Mammary epithelial cell (primary cell): ENCODE measurements at regions of chr5 and their contacts with region 1.

Region 1: DNA sequence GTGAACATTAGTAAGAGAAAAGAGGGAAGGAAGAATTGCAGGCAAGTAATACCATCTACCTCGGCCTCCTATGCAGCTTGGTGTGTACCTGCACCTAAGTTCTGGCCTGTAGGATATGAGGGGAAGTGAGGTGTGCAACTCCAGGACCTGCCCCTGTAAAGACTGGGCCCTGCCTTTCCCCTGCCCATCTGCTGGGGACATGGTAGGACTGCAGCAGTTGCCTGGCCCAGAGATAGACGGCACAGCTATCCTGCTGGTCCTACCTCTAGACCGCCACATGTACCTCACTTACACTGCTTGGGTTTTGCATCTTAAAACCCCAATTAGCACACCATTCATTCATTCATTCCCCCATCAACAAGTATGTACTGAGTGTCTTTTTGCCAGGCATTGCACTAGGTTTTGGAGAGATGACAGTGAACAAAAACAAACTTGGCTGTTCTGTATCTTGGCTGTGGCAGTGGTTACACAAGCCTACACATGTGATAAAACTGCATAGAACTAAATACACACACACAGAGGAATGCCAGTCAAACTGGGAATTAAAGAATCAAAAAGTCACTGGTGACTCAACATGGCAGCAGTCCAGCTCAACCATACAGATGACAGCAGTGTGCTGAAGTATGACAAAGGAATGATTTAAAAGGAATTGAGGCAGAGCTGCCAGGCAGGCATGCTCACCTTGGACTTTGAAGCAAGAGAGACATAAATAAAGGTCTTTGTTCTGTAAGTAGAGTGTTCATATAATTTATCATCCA is 23.3 kb upstream of the MGAT1 start:
- DNase-seq: peak; percentile 96
- H3K4me3 ChIP-seq: no peak overlapping the region
- H3K27ac ChIP-seq: peak overlapping the region; percentile 4
- H3K4me1 ChIP-seq: peaks cover 28% of the 10 kb centered on the region
- H3K27me3 ChIP-seq: no peaks in the 10 kb centered on the region
- CTCF ChIP-seq: no peak

Region 2: DNA sequence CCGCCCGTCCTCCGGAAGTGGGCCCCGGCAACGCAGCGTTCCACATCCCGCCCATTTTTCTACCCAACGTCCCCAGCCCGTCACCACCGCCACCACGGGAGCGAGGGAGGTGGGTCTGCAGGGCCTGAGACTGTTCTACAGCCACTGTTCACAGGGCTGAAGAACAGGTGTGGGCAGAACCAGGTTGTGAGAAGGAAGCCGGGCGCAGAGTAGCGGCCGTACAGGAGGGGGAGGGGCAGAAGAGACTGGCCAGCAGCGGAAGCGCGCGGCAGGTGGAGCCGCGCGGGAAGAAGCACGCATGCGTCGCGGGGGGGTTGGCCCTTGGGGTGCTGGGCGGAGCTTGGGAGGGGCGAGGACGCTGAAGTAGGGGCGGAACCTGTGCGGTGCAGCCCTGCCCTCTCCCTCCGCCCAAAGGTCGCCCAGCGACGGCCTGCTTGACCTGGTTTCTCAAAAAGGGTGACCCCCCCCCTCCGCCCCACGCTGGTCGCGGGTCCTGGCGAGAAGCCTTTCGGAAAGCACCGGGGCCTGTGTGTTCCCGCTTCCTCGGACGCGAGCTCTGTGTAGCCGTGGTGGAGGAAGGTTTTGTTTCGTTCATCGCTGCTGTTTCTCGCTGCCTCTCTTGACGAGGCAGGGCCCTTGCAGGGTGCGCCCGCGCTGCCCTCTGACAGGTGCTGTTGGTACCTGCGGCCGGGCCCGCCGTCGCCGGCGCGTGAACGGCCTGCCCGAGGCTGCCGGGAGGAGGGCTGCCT is 15.6 kb before region 1 on chr5:
- CTCF ChIA-PET with region 1: no interaction called
- dilution Hi-C with region 1: no loop called
- in situ Hi-C with region 1: no loop called
- intact Hi-C with region 1: loop called (anchors 1 kb)
- DNase-seq: peak; percentile 94
- H3K4me3 ChIP-seq: peak overlapping the region; percentile 71 to 99 (median 85)
- H3K27ac ChIP-seq: peak overlapping the region; percentile 60
- H3K4me1 ChIP-seq: peaks cover 44% of the 10 kb centered on the region
- H3K27me3 ChIP-seq: no peaks in the 10 kb centered on the region
- CTCF ChIP-seq: no peak

Region 3: GRCh38 chr5:180868960-180869359 is 43.0 kb after region 1 on chr5:
- CTCF ChIA-PET with region 1: no interaction called
- dilution Hi-C with region 1: loop called (anchors 5 kb)
- in situ Hi-C with region 1: no loop called
- intact Hi-C with region 1: no loop called
- DNase-seq: peak; percentile 68
- H3K4me3 ChIP-seq: no peak overlapping the region
- H3K27ac ChIP-seq: no peak overlapping the region
- H3K4me1 ChIP-seq: no peaks in the 10 kb centered on the region
- H3K27me3 ChIP-seq: no peaks in the 10 kb centered on the region
- CTCF ChIP-seq: peak; percentile 78 to 93